Activated CD8-positive, alpha-beta T cell treated with anti-CD3 and anti-CD28 coated beads, Interleukin-2, amount 10 ng/mL, durations not matched to agents 7 days and 5 days (primary cell): ENCODE measurements at regions of chr3 and their contacts with region 1.

Region 1: DNA sequence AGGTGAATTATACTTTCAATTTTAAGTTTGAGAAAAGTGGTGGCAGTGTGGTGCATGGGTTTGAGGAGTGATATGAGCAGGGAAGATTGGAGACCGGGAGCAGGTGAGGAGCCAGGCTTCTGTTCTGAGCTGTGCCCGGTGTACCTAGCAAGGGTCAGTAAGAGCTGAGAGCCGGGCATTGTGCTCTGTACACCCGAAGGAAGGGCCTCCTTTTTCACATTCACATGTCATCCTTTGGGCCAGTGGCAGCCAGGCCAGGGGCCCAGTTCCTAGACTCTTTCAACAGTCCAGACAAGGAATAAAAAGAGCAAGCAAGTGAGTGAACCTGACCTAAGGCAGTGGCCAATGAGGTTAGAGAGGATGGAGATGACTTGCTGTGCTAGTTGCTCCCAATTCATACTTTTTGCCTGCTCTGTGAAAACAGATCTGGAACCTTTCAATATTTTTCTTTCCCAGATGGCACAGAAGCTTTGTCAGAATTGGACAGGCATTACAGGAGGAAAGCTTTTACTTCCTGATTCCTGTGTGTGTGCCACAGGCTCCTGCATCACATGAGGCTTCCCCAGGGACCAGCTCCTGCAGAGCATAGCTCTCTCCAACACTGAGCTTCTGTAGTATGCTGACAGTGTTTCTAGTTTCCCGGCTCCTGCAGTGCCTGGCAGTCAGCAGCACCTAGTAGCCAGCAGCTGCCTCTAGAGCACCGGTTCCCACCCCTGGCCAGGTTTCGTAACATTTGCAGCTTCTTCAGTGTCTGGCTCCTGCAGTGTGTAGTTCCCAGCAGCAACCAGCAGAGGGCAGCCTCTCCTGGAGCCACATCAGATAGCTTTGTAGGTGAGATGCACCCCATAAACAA is 5.3 kb upstream of the TRA2B start:
- DNase-seq: peak; percentile 91
- ATAC-seq: peak; percentile 95
- H3K4me3 Mint-ChIP-seq: peak overlapping the region; percentile 26
- H3K27ac Mint-ChIP-seq: peak overlapping the region; percentile 47
- H3K4me1 Mint-ChIP-seq: peaks cover 21% of the 10 kb centered on the region
- H3K27me3 Mint-ChIP-seq: peaks cover 14% of the 10 kb centered on the region

Region 2: DNA sequence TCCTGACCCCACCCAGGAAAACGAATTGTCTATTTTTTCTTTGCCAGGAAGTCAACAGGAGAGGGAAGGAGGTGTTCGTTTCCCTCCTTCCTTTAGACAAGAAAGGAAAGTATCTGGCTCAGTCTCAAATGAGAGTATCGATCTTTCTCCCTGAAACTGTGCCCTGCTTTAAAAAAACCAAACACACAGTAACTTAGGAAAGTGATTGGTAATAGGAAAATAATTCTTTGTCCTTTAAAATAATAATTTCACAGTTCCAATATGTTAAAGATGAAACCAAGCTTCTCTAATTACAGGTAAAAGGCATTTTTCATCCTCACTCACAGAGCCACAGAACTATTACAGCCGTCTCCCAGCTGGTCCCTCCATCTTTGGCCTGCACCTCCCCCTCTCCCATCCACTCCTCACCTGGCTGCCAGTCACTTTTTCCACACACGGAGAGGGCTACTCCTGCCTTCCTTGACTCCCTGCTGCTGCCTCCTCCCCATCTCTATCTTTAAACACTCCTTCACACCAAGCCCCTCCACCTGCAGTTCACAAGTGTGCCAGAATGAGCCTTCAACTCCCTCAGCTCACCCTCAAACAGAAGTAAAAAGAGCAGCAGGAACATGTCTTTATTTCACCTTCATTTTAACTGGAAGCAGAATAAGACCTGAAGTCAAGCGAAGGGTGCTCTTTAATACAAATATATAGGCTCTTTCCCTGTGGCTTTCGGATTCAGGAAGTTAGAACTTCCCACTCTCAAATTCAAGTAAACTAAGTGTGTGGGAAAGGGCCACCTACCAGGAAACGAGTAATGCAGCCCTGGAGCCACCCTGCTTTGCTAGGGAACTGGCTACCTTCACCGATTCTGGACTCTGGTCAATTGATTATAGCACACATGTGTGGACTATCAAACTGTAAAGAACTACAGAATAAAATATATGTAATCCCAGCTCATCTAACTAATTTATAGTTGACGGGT is 240.6 kb before region 1 on chr3:
- CTCF ChIA-PET with region 1: no interaction called
- POLR2A ChIA-PET with region 1: no interaction called
- DNase-seq: no peak
- ATAC-seq: no peak
- H3K4me3 Mint-ChIP-seq: no peak overlapping the region
- H3K27ac Mint-ChIP-seq: no peak overlapping the region
- H3K4me1 Mint-ChIP-seq: no peaks in the 10 kb centered on the region
- H3K27me3 Mint-ChIP-seq: peaks cover 10% of the 10 kb centered on the region

Region 3: DNA sequence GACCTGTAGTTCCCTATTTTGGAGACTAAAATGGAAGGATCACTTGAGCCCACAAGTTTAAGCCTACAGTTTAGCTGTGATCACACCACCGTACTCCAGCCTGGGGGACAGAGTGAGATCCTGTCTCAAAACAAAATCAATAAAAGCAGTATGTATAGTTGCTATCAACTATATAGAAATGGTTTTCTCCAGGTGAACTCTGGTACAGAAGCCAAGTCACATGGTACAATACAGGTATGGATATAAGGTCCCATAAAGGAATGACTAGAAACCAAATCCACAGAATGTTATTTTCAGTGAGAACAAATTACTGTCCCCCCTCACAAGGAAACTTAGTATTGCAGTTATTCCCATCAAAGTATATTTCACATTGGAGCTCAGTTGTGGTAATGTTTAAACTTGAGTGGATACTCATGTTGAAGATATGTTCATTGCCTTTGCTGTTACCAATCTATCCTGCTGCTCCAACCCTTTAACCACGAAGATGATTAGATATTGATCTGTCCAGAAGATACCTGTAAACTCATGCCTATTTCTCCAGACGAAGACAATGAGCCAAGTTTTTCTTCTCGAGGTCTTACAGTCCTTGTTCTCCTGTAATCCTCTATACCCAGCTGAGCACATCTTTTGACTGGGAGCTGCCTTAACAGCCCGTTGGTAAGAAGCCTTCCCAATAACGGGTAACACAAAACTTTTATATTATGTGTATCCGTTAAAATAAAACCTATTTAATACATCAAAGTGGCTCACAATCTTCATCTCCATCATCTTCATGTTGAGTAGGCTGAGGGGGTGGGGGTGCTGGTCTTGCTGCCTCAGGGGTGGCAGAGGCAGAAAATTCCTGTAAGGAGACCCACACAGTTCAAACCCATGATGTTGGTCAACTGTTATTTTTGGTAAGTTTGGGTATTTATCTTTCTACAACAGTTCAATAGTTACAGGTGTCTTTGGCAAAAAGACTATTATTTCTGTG is 29.9 kb before region 1 on chr3:
- CTCF ChIA-PET with region 1: interaction called, 19 read pairs
- POLR2A ChIA-PET with region 1: no interaction called
- DNase-seq: no peak
- ATAC-seq: no peak
- H3K4me3 Mint-ChIP-seq: no peak overlapping the region
- H3K27ac Mint-ChIP-seq: no peak overlapping the region
- H3K4me1 Mint-ChIP-seq: peaks cover 3% of the 10 kb centered on the region
- H3K27me3 Mint-ChIP-seq: no peaks in the 10 kb centered on the region

Region 4: DNA sequence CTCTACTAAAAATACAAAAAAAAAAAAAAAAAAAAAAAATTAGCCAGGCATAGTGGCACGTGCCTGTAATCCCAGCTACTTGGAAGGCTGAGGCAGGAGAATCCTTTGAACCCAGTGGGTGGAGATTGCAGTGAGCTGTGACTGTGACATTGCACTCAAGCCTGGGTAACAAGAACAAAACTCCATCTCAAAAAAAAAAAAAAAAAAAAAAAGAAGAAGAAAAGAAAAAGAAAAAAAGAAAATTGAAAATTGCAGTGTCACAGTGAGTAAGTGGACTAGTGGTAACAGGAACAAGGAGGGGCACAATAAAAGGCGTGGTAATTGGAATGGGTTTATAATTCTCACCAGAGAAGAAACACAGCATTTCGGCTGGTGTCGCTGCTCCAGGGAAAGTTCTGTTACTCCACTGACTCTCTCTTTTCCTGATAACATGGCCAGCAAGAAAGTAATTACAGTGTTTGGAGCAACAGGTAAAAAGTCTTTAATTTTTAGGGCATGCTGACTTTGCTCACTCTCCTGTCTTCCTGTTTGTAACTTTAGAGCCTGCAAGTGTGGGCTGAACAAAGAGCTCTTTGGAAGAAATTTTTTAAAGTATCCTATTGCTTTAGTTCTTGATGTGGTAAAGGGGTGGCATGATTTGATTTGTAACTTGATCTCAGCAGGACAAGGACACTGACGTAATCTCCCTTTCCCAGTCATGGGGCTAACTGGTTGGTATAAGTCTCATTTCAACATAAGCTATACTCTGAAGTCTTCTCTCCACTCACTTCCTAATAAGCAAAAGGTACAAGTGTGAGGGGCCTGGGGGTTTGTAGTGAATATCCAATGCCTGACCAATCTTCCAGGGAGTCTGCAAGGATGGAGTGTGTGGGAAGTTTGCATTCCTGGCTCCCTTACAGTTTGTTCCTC is 16.7 kb after region 1 on chr3:
- CTCF ChIA-PET with region 1: interaction called, 123 read pairs
- POLR2A ChIA-PET with region 1: interaction called, 6 read pairs
- DNase-seq: no peak
- ATAC-seq: no peak
- H3K4me3 Mint-ChIP-seq: no peak overlapping the region
- H3K27ac Mint-ChIP-seq: peak overlapping the region; percentile 39
- H3K4me1 Mint-ChIP-seq: no peaks in the 10 kb centered on the region
- H3K27me3 Mint-ChIP-seq: peaks cover 14% of the 10 kb centered on the region

Region 5: GRCh38 chr3:185983495-185984141 is 40.5 kb after region 1 on chr3:
- CTCF ChIA-PET with region 1: interaction called, 58 read pairs
- POLR2A ChIA-PET with region 1: interaction called, 3 read pairs
- DNase-seq: peak; percentile 61
- ATAC-seq: peak; percentile 83
- H3K4me3 Mint-ChIP-seq: no peak overlapping the region
- H3K27ac Mint-ChIP-seq: no peak overlapping the region
- H3K4me1 Mint-ChIP-seq: peaks cover 4% of the 10 kb centered on the region
- H3K27me3 Mint-ChIP-seq: peaks cover 17% of the 10 kb centered on the region

Region 6: GRCh38 chr3:186121968-186122367 is 178.8 kb after region 1 on chr3:
- CTCF ChIA-PET with region 1: no interaction called
- POLR2A ChIA-PET with region 1: no interaction called
- DNase-seq: no peak
- ATAC-seq: no peak
- H3K4me3 Mint-ChIP-seq: no peak overlapping the region
- H3K27ac Mint-ChIP-seq: no peak overlapping the region
- H3K4me1 Mint-ChIP-seq: no peaks in the 10 kb centered on the region
- H3K27me3 Mint-ChIP-seq: peaks cover 42% of the 10 kb centered on the region

Region 7: GRCh38 chr3:186259612-186260383 is 316.7 kb after region 1 on chr3:
- CTCF ChIA-PET with region 1: interaction called, 10 read pairs
- POLR2A ChIA-PET with region 1: no interaction called
- DNase-seq: peak; percentile 68
- ATAC-seq: peak; percentile 96
- H3K4me3 Mint-ChIP-seq: no peak overlapping the region
- H3K27ac Mint-ChIP-seq: no peak overlapping the region
- H3K4me1 Mint-ChIP-seq: peaks cover 11% of the 10 kb centered on the region
- H3K27me3 Mint-ChIP-seq: no peaks in the 10 kb centered on the region

Region 8: DNA sequence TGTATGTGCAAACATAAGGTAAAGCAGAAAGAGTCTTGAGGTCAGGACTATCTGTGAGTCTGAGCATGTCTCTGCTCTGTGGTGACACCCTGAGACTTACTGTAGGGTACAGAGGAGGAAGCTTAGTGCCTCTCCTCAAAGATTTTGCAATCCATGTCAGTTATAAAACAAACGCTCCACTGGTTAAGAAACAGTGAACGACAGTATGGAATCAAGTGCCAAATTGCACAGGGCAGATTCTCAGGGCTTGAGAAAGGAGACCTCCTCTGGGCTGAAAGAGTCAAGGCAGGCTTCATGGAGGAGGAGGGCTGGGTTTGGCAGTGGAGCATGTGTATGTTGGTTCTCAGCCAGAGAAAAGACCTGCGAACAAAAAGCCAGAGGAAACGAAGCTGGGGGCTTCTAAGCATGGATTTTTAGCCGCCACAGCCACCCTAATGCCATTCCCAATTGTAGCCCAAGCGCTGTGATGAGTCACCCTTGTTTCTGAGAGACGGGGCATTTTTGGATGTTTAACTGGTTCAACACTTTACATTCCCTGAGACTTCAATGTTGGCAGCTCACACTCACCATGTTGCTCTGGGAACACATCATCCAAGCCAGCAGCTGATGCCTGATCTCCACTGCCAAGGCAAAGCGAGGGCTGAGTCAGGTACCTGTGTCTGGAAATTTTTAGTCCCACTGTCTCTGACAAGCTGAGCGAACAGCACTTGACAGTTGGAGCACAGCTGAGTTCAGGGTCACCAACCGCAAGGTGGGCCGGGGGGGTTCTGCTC is 422.3 kb after region 1 on chr3:
- CTCF ChIA-PET with region 1: no interaction called
- POLR2A ChIA-PET with region 1: no interaction called
- DNase-seq: no peak
- ATAC-seq: no peak
- H3K4me3 Mint-ChIP-seq: no peak overlapping the region
- H3K27ac Mint-ChIP-seq: no peak overlapping the region
- H3K4me1 Mint-ChIP-seq: peaks cover 6% of the 10 kb centered on the region
- H3K27me3 Mint-ChIP-seq: peaks cover 48% of the 10 kb centered on the region

Region 9: DNA sequence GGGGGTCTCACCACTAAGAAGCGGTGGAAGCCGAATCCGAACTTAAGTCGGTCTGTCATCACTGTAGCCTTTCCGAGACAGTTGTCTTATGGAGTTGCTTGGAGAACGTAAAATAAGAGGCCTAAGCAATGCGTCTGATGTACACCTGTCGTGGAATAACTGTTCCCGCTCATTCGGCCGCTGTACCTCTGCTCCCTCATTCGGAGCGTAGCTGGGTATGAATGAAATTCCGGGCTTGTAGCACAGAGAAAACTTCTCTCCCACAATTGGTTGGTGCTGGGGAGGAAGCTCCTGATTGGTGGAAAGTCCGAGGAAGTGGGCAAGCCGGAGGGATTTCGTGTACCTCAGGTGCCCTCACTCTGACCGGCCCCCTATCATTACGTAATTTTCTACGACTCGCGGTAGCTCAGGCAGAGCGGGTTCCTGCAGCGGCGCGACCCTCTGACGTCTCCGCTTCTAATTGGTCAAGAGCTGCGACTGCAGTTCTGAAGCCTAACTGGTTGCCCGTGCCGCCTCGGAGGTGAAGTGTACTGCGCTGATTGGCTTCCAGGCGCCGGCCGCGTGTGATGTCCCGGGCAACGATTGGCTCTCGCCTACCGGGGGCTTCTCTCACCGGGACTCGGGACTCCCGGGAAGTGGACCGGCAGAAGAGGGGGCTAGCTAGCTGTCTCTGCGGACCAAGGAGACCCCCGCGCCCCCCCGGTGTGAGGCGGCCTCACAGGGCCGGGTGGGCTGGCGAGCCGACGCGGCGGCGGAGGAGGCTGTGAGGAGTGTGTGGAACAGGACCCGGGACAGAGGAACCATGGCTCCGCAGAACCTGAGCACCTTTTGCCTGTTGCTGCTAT is 627.2 kb after region 1 on chr3 and contains the start of gene DNAJB11:
- CTCF ChIA-PET with region 1: interaction called, 12 read pairs
- POLR2A ChIA-PET with region 1: interaction called, 32 read pairs
- DNase-seq: peak; percentile 99
- ATAC-seq: peak; percentile 89
- H3K4me3 Mint-ChIP-seq: peak within 1 kb of the TSS; percentile 97
- H3K27ac Mint-ChIP-seq: peak within 1 kb of the TSS; percentile 99
- H3K4me1 Mint-ChIP-seq: peaks cover 60% of the 10 kb centered on the region
- H3K27me3 Mint-ChIP-seq: no peaks in the 10 kb centered on the region
- total RNA-seq, gene DNAJB11: 55.9 to 56.5 TPM